Right ventricle myocardium inferior (tissue), 1 donor: ENCODE measurements at regions of chr12 and their contacts with region 1.

Region 1: GRCh38 chr12:116708826-116709756 is 28.8 kb downstream of the SPRING1 start:
- DNase-seq: no peak
- ATAC-seq: peak; percentile 72

Region 2: GRCh38 chr12:115998119-115998633 is 710.9 kb before region 1 on chr12:
- intact Hi-C with region 1: loop called (anchors 5 kb)
- DNase-seq: no peak
- ATAC-seq: no peak

Region 3: GRCh38 chr12:116244001-116244400 is 465.1 kb before region 1 on chr12:
- intact Hi-C with region 1: no loop called
- DNase-seq: no peak
- ATAC-seq: no peak

Region 4: GRCh38 chr12:116773276-116773731 is 64.2 kb after region 1 on chr12:
- intact Hi-C with region 1: no loop called
- DNase-seq: no peak
- ATAC-seq: no peak